ENCODE measurements at regions of chr10 and their contacts with region 1.

Region 1: DNA sequence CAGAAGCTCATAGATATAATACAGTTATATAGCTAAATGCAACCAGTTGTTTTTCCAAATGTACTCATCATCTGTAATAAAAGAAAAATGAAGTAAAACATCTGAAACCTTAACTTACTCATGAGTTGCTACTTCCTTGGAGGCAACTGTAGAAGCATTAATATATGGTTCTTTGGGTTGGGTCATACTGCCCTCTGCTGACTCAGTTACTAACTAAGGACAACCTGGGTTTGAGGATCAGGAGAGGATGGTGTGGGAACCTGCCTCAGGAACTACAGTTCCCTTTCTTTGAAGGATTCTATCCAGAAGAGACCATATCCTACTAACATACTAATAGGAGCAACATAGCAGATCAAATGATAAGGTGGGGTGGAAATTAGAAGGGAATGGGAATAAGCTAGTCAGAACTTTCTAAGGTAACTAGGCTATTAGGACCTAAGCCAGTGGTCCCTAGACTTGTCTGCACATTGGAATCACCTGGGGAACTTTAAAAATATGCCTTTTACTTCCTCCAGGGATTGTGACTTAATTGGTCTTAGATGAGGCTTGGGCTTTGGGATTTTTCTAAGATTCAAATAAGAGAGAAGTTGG is 20.7 kb downstream of the COX15 start:
- DNase-seq: peak; percentile 39
- CTCF ChIP-seq: peak; percentile 54

Region 2: DNA sequence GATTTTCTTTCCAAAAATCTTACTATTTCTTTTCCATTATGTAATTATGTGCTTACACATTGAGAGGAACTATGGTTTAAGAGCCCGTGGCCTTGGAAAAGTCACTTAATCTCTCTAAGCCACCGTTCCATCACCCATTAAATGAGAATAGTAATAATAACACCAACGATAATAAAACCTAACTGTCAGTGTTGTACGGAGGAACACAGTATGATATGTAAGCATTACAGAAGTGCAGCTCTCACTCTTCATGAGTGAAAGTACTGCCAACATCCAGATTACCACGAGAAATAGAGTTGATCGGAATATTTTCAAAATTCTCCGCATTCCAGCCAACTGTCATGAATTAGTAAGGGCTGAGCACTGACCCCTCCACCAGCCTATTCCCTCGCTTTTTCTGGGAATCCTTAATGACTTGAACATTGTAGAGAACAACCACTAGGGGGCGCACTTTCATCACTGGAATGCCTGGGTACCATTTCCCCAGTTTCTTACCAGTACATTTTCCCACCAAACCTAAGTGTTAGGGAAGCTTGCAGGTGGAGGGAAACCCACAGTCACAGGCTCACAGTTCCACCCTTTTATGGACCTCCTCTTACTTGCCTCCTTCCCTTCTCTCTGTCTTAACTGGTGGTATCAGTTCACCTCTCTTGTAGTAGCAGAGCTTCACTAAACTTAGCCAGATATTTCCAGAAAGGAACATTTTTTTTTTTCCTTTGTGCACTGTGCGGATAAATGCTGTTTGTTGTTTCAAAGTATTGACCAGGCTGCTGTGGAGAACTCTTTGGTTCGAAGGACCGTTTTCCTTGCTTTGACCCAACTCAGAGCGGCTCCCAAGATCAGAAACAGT is 150.7 kb before region 1 on chr10:
- CTCF ChIA-PET with region 1: interaction called, 12 read pairs
- POLR2A ChIA-PET with region 1: no interaction called
- DNase-seq: peak; percentile 45
- CTCF ChIP-seq: peak; percentile 65

Region 3: GRCh38 chr10:99630439-99630838 is 80.8 kb before region 1 on chr10:
- CTCF ChIA-PET with region 1: interaction called, 12 read pairs
- POLR2A ChIA-PET with region 1: no interaction called
- DNase-seq: no peak
- CTCF ChIP-seq: peak; percentile 47

Region 4: DNA sequence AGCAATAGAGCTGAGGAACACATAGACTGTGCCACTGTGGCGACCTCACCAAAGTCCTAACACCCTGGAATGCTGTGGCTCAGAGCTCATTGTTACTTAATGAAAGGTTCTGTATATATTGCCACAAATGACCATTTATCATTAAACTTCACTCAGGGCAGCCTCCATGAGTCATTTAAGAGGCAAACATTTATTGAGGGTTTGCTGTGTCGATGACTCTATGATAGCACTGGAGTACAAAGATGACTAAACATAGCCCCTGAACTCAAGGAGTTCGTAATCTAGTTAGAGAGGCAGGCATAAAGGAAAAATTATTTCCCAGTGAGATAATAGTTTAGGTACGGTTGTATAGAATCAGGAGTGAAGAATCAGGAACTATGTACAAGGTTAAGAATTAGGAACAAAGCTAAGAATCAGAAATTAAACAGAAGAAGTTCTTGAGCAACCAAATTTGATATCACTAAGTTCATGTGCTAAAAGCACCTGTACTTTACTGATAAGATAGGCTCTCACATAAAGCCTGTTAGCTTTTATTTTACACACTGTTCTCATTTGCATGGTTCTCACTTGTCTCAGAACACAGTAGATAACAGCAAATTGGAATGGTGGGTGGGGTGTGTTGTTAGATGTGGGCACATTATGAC is 44.0 kb before region 1 on chr10:
- CTCF ChIA-PET with region 1: no interaction called
- POLR2A ChIA-PET with region 1: no interaction called
- DNase-seq: no peak
- CTCF ChIP-seq: no peak

Region 5: GRCh38 chr10:99698504-99699080 is 12.6 kb before region 1 on chr10:
- CTCF ChIA-PET with region 1: interaction called, 19 read pairs
- POLR2A ChIA-PET with region 1: no interaction called
- DNase-seq: no peak
- CTCF ChIP-seq: peak; percentile 9

Region 6: DNA sequence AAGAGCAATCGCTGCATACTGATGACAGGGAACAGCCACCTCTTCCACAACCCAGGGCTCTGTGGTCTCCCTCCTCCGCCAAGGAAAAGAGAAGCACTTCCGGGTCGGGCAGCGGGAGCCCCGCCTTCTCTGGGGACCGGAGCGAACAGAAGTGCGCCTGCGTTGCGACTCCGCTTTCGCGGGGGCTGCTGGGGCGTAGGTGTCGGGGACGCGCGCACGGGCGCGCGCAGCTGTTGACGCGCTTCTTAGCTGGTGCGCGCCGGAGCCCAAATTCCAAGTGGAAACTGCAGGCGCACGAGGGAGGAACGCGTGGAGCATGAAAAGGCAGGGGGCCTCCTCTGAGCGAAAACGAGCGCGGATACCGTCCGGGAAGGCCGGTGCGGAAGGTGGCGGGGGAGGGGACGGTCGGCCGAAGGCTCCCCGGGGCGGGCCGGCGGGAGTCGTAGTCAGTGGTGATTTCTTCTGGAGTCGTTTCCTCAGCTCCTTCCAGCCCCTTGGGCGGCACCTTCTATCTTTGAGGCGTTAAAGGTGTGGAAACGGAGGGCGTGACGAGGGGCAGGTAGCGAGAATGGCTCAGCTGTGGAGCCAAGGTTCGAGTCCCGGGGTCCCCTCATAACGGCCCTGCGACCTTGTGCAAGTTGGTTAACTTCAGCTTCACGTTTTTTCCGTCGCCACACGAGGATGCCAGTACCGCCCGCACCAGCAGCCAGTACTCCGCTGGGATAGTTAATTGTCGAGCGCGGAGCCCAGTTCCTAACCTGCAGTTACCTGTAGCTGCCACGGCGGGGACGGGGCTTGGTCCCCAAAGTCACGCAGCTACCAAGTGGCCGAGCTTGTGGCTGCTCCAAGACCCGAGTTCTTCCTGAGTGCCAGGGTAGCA is 21.0 kb after region 1 on chr10 and contains the starts of genes COX15 and CUTC:
- CTCF ChIA-PET with region 1: interaction called, 11 read pairs
- POLR2A ChIA-PET with region 1: interaction called, 3 read pairs
- DNase-seq: peak; percentile 96
- CTCF ChIP-seq: peak; percentile 12

Measured in GM10248 (cell line).